ENCODE measurements at regions of chr7 and their contacts with region 1.

Region 1: GRCh38 chr7:86939197-86939814 is 120.1 kb downstream of the ELAPOR2 start:
- DNase-seq: peak in 7 of 9 donors; percentile 30 to 61 (median 51)
- ATAC-seq: peak; percentile 70
- H3K4me3 ChIP-seq: no peak overlapping the region
- H3K4me3 Mint-ChIP-seq: no peak overlapping the region
- H3K27ac ChIP-seq: no peak overlapping the region
- H3K27ac Mint-ChIP-seq: peak overlapping the region in 1 of 9 donors; percentile 73
- H3K4me1 ChIP-seq: no peaks in the 10 kb centered on the region
- H3K4me1 Mint-ChIP-seq: peaks cover 0 to 2% (median 0%) of the 10 kb centered on the region in 7 donors
- H3K27me3 ChIP-seq: no peaks in the 10 kb centered on the region
- H3K27me3 Mint-ChIP-seq: peaks cover 0 to 5% (median 0%) of the 10 kb centered on the region in 5 donors

Region 2: GRCh38 chr7:85595639-85596268 is 1343.6 kb before region 1 on chr7:
- CTCF ChIA-PET with region 1: no interaction called
- POLR2A ChIA-PET with region 1: no interaction called
- intact Hi-C with region 1: no loop called
- DNase-seq: no peak
- ATAC-seq: no peak
- H3K4me3 ChIP-seq: no peak overlapping the region
- H3K4me3 Mint-ChIP-seq: no peak overlapping the region
- H3K27ac ChIP-seq: no peak overlapping the region
- H3K27ac Mint-ChIP-seq: no peak overlapping the region
- H3K4me1 ChIP-seq: no peaks in the 10 kb centered on the region
- H3K4me1 Mint-ChIP-seq: no peaks in the 10 kb centered on the region
- H3K27me3 ChIP-seq: no peaks in the 10 kb centered on the region
- H3K27me3 Mint-ChIP-seq: no peaks in the 10 kb centered on the region

Region 3: GRCh38 chr7:86926732-86927131 is 12.6 kb before region 1 on chr7:
- CTCF ChIA-PET with region 1: no interaction called
- POLR2A ChIA-PET with region 1: interaction called, 4 read pairs
- intact Hi-C with region 1: loop called in 1 of 2 experiments (anchors 1 kb)
- DNase-seq: peak in 7 of 9 donors; percentile 25 to 56 (median 38)
- ATAC-seq: peak; percentile 84
- H3K4me3 ChIP-seq: no peak overlapping the region
- H3K4me3 Mint-ChIP-seq: no peak overlapping the region
- H3K27ac ChIP-seq: no peak overlapping the region
- H3K27ac Mint-ChIP-seq: peak overlapping the region in 2 of 9 donors; percentile 28 to 53
- H3K4me1 ChIP-seq: no peaks in the 10 kb centered on the region
- H3K4me1 Mint-ChIP-seq: no peaks in the 10 kb centered on the region
- H3K27me3 ChIP-seq: no peaks in the 10 kb centered on the region
- H3K27me3 Mint-ChIP-seq: peaks cover 0 to 16% (median 4%) of the 10 kb centered on the region in 5 donors

Region 4: DNA sequence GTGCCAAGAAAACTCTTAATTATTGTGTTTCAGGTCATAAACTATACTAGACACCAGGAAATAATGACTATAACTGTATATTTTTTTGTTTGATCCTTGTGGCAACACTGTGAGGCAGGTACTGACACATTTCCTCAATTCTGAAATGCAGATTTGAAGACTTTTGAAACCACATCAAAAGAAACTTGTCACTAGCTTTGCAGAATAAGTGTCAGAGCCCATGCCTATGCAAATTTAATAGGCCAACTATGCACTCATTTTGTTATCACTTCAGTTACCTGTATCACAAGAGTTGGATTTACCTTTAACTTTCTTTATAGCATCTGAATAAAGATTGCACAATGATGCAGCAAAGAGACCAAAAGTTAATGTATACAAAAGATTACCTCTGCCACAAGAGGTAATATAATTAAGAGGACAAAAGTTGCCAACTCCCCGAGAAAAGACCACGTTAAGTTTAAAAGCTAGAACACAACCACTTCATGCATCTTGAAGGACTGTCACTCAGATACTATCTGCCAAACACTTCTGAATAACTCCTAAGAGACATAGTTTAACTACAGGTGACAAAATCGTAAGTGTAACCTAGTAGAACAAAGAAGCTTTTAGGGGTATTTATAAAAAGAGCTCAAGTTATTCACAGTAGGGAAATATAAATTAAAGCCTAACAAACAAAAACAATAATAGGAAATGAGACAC is 39.7 kb after region 1 on chr7:
- CTCF ChIA-PET with region 1: no interaction called
- POLR2A ChIA-PET with region 1: no interaction called
- intact Hi-C with region 1: loop called in 1 of 2 experiments (anchors 2 kb)
- DNase-seq: peak in 7 of 9 donors; percentile 69 to 92 (median 85)
- ATAC-seq: peak; percentile 91
- H3K4me3 ChIP-seq: no peak overlapping the region
- H3K4me3 Mint-ChIP-seq: peak overlapping the region in 8 of 10 donors; percentile 23 to 65 (median 50)
- H3K27ac ChIP-seq: peak overlapping the region; percentile 63
- H3K27ac Mint-ChIP-seq: peak overlapping the region in 8 of 9 donors; percentile 71 to 97 (median 87)
- H3K4me1 ChIP-seq: peaks cover 22 to 30% of the 10 kb centered on the region in 2 donors
- H3K4me1 Mint-ChIP-seq: peaks cover 14 to 53% (median 35%) of the 10 kb centered on the region in 7 donors
- H3K27me3 ChIP-seq: no peaks in the 10 kb centered on the region
- H3K27me3 Mint-ChIP-seq: no peaks in the 10 kb centered on the region

Region 5: GRCh38 chr7:86991771-86992191 is 52.5 kb after region 1 on chr7:
- CTCF ChIA-PET with region 1: no interaction called
- POLR2A ChIA-PET with region 1: no interaction called
- intact Hi-C with region 1: loop called in 1 of 2 experiments (anchors 1 kb)
- DNase-seq: no peak
- ATAC-seq: no peak
- H3K4me3 ChIP-seq: no peak overlapping the region
- H3K4me3 Mint-ChIP-seq: no peak overlapping the region
- H3K27ac ChIP-seq: no peak overlapping the region
- H3K27ac Mint-ChIP-seq: no peak overlapping the region
- H3K4me1 ChIP-seq: no peaks in the 10 kb centered on the region
- H3K4me1 Mint-ChIP-seq: peaks cover 0 to 10% (median 5%) of the 10 kb centered on the region in 7 donors
- H3K27me3 ChIP-seq: no peaks in the 10 kb centered on the region
- H3K27me3 Mint-ChIP-seq: peaks cover 0 to 11% (median 5%) of the 10 kb centered on the region in 5 donors

Region 6: DNA sequence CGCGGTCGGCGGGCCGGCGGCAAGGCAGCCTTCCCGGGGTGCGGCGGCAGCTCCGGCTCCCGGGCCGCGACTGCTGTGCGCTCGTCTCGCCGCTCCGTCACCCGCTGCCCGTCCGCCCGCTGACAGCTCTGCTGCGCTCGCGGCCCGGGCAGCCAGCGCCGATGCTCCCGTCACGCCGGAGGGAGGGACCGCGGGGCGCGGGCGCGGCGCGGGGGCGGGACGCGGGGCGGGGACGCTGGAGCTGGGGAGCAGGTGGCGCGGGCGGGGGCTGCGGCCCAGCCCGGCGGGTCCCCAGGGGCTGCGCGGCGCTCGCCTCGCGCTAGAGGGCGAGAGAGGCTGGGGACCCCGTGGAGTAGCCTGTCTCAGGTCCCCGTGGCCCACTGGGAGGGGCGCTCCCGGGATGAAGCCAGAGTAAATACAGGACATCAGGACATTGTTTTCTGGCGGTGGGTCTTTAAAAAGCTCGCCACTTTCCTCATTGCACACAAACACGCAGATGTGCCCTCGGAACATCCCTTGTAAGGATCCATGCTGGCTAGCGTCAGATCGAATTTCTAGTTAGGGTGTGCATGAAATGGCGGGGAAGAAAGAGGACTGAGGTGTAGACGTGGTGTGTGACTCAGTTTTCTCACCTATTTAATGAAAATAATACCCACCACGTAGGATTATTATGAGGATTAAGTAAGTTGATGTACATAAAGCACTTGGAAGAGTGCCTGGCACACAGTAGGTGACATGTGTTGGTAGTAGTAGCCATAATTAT is 120.4 kb after region 1 on chr7 and contains the start of gene ELAPOR2:
- CTCF ChIA-PET with region 1: no interaction called
- POLR2A ChIA-PET with region 1: no interaction called
- intact Hi-C with region 1: loop called in 1 of 2 experiments (anchors 1 kb)
- DNase-seq: peak; percentile 68 to 83 (median 75)
- ATAC-seq: peak; percentile 97
- H3K4me3 ChIP-seq: peak within 1 kb of the TSS; percentile 66
- H3K4me3 Mint-ChIP-seq: peak within 1 kb of the TSS; percentile 78 to 88 (median 84)
- H3K27ac ChIP-seq: peak within 1 kb of the TSS; percentile 52
- H3K27ac Mint-ChIP-seq: peak within 1 kb of the TSS in 8 of 9 donors; percentile 6 to 89 (median 70)
- H3K4me1 ChIP-seq: peaks cover 9 to 10% of the 10 kb centered on the region in 2 donors
- H3K4me1 Mint-ChIP-seq: peaks cover 7 to 18% (median 14%) of the 10 kb centered on the region in 7 donors
- H3K27me3 ChIP-seq: no peaks in the 10 kb centered on the region
- H3K27me3 Mint-ChIP-seq: peaks cover 9 to 23% (median 14%) of the 10 kb centered on the region in 5 donors
- total RNA-seq, gene ELAPOR2: 5.3 to 11.0 (median 6.4) TPM

Region 7: GRCh38 chr7:87416682-87417587 is 477.6 kb after region 1 on chr7:
- CTCF ChIA-PET with region 1: no interaction called
- POLR2A ChIA-PET with region 1: no interaction called
- intact Hi-C with region 1: loop called in 1 of 2 experiments (anchors 1 kb)
- DNase-seq: peak in 8 of 9 donors; percentile 43 to 73 (median 63)
- ATAC-seq: peak; percentile 82
- H3K4me3 ChIP-seq: no peak overlapping the region
- H3K4me3 Mint-ChIP-seq: no peak overlapping the region
- H3K27ac ChIP-seq: no peak overlapping the region
- H3K27ac Mint-ChIP-seq: no peak overlapping the region
- H3K4me1 ChIP-seq: no peaks in the 10 kb centered on the region
- H3K4me1 Mint-ChIP-seq: no peaks in the 10 kb centered on the region
- H3K27me3 ChIP-seq: no peaks in the 10 kb centered on the region
- H3K27me3 Mint-ChIP-seq: peaks cover 0 to 7% (median 0%) of the 10 kb centered on the region in 5 donors

Region 8: DNA sequence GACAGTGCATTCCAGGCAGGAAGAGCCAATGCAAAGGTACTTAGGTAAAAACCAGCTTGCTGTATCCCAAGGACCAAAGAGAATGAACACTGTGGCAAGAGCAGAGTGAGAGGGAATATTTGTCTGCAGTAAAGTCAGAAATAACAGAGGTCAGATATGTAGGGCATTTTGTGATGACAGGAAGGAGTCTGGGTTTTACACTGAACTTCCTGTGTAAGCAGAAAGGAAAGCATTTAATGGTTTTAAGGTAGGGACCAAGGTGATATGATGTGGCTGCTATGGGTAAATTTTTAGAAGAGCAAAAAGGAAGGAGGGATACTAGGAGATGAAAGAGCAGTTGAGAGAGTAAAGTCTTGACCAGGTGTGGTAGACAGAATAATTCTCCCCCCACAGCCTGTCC is 651.3 kb after region 1 on chr7:
- CTCF ChIA-PET with region 1: no interaction called
- POLR2A ChIA-PET with region 1: no interaction called
- intact Hi-C with region 1: no loop called
- DNase-seq: no peak
- ATAC-seq: peak; percentile 58
- H3K4me3 ChIP-seq: no peak overlapping the region
- H3K4me3 Mint-ChIP-seq: no peak overlapping the region
- H3K27ac ChIP-seq: no peak overlapping the region
- H3K27ac Mint-ChIP-seq: no peak overlapping the region
- H3K4me1 ChIP-seq: peaks cover 3 to 11% of the 10 kb centered on the region in 2 donors
- H3K4me1 Mint-ChIP-seq: peaks cover 7 to 18% (median 13%) of the 10 kb centered on the region in 7 donors
- H3K27me3 ChIP-seq: no peaks in the 10 kb centered on the region
- H3K27me3 Mint-ChIP-seq: no peaks in the 10 kb centered on the region

Measured in naive thymus-derived CD4-positive, alpha-beta T cell (primary cell).